Astrocyte of the cerebellum (primary cell): ENCODE measurements at regions of chr11 and their contacts with region 1.

Region 1: DNA sequence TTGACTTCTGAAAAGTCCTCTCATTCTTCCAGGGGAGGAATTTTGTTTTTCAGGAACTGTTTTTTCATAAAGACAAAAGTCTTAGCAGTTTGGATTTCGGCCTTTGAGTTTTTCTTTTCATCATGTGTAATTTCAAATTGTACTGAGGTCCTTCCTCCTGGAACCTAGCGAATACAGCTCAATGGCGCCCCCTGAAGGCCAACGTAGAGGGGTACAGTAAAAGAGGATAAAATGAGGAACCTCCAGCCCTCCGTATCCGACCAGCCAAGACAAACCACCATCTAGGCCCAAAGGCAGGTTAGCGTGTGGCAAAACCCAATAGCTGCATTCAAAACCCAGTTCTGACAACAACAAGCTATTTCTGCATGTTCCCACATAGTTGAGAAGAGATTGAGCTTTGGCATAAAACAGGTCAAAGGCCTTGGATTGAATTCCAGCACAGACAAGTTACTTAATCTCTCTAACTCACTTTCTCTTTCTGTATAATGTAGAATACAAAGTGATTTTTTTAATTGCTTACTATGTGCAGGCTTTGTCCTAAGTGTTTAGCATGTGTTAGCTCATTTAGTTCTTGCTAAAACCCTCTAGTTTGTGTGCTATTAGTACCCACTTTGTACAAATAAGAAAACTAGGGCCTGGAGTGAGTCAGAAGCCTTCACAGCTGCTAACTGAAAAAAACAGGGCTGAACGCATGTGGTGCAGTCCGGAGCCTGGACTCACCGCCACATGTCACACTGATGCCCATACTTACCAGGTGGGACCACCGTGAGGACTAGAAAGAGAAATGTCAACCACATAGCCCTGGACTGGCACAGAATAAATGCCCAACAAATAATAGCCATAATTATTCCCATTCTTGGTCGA is 43.2 kb upstream of the ETS1 start:
- DNase-seq: peak; percentile 76
- H3K4me3 ChIP-seq: no peak overlapping the region
- CTCF ChIP-seq: peak; percentile 81

Region 2: DNA sequence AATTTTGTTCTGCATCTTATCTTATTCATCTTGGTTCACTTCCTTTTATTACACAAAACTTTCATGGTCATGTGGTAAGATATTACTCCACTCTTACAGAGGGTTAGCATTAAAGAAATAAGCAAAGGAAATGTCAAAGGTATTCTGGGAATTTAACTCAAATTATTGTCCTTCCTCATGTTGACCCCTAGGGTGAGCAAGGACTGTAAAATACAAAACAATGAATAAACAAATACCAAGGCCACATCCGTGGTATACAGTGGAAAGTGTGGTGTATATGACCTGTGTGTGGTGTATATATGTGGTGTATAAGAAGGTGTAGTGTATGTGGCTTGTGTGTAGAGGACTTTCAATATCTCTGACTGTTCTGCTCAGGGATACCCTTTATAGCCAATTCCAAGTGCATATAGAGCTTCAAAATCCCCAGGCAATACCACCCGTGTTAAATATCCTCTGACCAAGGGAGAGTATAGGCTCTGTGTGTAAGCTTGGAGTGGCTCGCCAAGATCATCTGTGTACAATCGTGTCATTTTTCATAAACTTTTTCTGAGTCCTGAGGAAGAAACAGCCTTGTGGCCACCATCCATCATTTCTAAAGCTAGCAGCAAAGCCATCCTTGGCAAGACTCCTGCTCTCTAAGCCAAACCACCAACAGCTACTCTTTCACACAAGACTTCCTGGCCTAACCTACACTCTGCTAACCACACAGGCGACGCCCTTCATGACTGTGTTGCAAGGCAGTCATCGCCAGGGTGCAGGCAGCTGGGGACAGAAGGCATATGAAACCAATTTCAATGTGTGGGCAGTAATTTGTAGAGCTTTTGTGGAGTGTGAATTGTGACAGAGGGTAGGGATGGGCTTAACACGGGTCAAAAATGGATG is 591.2 kb before region 1 on chr11:
- in situ Hi-C with region 1: loop called (anchors 25 kb)
- DNase-seq: peak; percentile 83
- H3K4me3 ChIP-seq: no peak overlapping the region
- CTCF ChIP-seq: no peak

Region 3: DNA sequence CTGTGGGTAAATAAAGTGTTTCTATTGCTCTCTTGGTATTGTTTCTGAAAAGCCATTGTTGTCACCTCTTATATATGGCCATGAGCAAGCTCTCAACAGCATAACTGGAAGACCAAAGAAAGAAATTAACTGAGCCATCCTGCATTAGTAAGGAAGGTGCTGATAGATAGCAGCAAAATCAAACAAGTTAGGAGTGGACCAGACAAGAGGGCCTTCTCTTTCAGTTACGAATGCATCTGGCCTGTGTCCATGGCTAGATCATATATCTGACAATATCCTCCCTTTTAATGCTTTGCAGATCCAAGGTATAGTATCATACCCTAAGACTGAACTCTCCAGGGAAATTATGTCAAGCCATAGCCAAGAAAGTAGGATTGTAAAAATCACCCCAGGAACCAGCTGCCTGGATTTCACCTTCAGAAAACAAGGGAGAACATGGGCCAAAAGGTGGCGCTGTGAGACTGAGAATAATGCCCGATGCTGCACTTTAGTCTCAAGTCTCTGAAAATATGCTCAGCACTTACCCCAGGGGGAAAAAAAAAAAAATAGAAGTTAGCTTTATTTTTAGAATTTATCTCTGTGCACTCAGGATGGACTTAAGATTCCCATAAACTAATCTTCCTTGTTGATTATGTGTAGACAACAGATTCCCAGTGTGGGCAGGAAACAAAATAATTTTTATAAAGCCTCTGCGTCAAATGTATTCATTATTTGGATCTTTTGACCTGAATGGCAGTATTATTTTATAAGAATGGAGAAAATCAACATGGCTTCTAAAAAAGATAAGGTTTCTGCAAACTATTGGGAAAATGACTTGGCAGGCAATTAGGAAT is 458.3 kb before region 1 on chr11:
- in situ Hi-C with region 1: loop called (anchors 10 kb)
- DNase-seq: peak; percentile 85
- H3K4me3 ChIP-seq: no peak overlapping the region
- CTCF ChIP-seq: peak; percentile 79

Region 4: GRCh38 chr11:128195057-128195751 is 435.4 kb before region 1 on chr11:
- in situ Hi-C with region 1: no loop called
- DNase-seq: no peak
- H3K4me3 ChIP-seq: no peak overlapping the region
- CTCF ChIP-seq: no peak

Region 5: GRCh38 chr11:128323381-128323780 is 307.2 kb before region 1 on chr11:
- in situ Hi-C with region 1: loop called (anchors 25 kb)
- DNase-seq: no peak
- H3K4me3 ChIP-seq: no peak overlapping the region
- CTCF ChIP-seq: peak; percentile 12

Region 6: DNA sequence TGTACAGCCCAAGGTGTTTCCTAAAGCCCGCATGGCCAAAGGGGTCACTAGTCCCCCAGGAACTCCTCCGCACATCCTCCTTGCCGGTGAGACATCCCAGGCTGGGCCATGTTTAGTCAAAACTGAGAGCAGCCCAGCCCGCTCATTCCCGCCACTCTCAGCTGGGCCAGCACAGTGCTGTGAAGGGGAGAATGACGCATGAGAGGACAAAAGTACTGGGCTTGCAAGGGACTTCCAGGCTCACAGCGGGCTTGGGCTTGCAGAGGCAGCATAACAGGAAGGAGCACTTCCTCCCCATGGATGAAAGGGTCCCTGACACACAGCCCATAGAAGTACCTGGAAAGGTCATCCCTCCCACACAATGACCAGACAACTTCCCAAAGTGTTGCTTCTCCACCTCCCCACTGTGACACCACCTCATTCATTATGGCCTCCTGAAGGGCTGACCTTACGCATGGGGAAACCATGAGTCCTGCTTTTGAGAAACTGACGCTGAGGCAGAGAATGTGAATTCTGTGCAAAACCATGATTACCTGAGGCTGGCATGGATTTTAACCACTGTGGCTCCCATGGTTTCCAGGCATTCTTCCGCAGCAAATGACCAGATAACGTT is 62.3 kb before region 1 on chr11:
- in situ Hi-C with region 1: no loop called
- DNase-seq: no peak
- H3K4me3 ChIP-seq: no peak overlapping the region
- CTCF ChIP-seq: no peak

Region 7: GRCh38 chr11:128725630-128726319 is 95.2 kb after region 1 on chr11:
- in situ Hi-C with region 1: loop called (anchors 5 kb)
- DNase-seq: no peak
- H3K4me3 ChIP-seq: no peak overlapping the region
- CTCF ChIP-seq: no peak

Region 8: DNA sequence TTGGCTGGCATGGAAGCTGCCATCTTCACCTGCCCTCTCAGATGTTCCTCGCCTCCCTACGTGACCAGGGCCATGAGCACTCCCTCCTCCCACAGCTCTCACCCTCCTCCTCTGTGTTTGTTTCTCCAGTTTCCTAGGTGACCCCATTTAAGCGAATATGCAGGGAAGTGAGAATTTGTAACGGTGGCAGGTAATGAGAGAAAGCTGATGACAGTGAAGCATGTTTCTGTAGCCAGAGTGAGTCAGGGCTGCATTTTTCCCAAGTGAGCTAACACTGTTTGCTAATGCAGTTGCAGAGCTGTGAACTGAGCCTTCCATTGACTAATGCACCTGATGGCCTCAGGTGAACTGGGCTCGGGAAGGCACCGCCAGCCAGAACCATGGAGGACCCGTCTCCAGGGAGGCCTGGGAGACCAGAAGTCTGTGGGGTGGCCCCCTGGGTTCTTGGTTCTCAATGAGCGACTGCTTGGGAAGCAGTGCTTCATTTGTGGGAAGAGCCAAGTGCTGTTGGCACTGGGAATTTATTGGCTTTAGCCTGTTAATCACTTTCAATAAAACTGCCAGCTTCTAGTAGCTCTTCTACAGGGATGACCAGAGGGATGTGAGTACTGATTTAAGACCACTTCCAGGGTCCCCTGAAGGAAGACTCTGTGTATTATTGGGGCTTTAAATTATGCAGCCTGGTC is 809.6 kb after region 1 on chr11:
- in situ Hi-C with region 1: no loop called
- DNase-seq: no peak
- H3K4me3 ChIP-seq: no peak overlapping the region
- CTCF ChIP-seq: no peak